ENCODE measurements at regions of chr1 and their contacts with region 1.

Region 1: GRCh38 chr1:11907275-11908094 is 18.7 kb downstream of the KIAA2013 start:
- H3K4me3 ChIP-seq: no peak overlapping the region
- H3K27ac ChIP-seq: peak overlapping the region; percentile 92
- H3K4me1 ChIP-seq: no peaks in the 10 kb centered on the region
- CTCF ChIP-seq: peak; percentile 76

Region 2: GRCh38 chr1:11761988-11762406 is 145.5 kb before region 1 on chr1 and contains the start of gene C1orf167:
- CTCF ChIA-PET with region 1: no interaction called
- POLR2A ChIA-PET with region 1: no interaction called
- H3K4me3 ChIP-seq: no peak within 1 kb of the TSS
- H3K27ac ChIP-seq: no peak within 1 kb of the TSS
- H3K4me1 ChIP-seq: no peaks in the 10 kb centered on the region
- CTCF ChIP-seq: no peak

Region 3: GRCh38 chr1:11838349-11839272 is 68.9 kb before region 1 on chr1:
- CTCF ChIA-PET with region 1: interaction called, 6 read pairs
- POLR2A ChIA-PET with region 1: interaction called, 21 read pairs
- H3K4me3 ChIP-seq: no peak overlapping the region
- H3K27ac ChIP-seq: no peak overlapping the region
- H3K4me1 ChIP-seq: no peaks in the 10 kb centered on the region
- CTCF ChIP-seq: peak; percentile 95

Region 4: DNA sequence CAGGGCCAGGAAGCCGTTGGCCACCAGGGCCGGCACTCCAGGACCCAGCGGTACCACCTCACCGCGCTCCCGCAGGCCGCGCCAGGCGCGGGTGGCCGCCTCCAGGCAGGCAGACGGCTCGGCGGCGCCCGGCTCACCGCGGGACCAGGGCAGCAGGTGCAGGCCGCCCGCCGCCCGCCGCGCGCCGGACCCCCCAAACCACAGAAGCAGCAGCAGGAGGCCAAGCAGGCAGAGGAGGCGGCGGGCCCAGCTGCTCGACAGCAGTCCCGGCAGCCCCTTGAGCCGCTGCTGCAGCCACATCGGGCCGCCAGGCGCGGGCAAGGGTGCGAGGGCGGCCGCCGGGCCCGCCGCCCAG is 18.4 kb after region 1 on chr1:
- CTCF ChIA-PET with region 1: interaction called, 6 read pairs
- POLR2A ChIA-PET with region 1: interaction called, 40 read pairs
- H3K4me3 ChIP-seq: peak overlapping the region; percentile 65
- H3K27ac ChIP-seq: peak overlapping the region; percentile 63; the same call in 1 of the 2 replicates
- H3K4me1 ChIP-seq: peaks cover 4% of the 10 kb centered on the region
- CTCF ChIP-seq: no peak

Region 5: GRCh38 chr1:11967028-11967547 is 59.6 kb after region 1 on chr1:
- CTCF ChIA-PET with region 1: interaction called, 5 read pairs
- POLR2A ChIA-PET with region 1: interaction called, 48 read pairs
- H3K4me3 ChIP-seq: no peak overlapping the region
- H3K27ac ChIP-seq: no peak overlapping the region
- H3K4me1 ChIP-seq: no peaks in the 10 kb centered on the region
- CTCF ChIP-seq: peak; percentile 96

Region 6: GRCh38 chr1:12019858-12020509 is 112.5 kb after region 1 on chr1:
- CTCF ChIA-PET with region 1: no interaction called
- POLR2A ChIA-PET with region 1: interaction called, 29 read pairs
- H3K4me3 ChIP-seq: peak overlapping the region; percentile 78
- H3K27ac ChIP-seq: peak overlapping the region; percentile 19; the same call in 1 of the 2 replicates
- H3K4me1 ChIP-seq: no peaks in the 10 kb centered on the region
- CTCF ChIP-seq: no peak